PC-9 (cell line): ENCODE measurements at regions of chr21 and their contacts with region 1.

Region 1: GRCh38 chr21:35038772-35039319 is 10.3 kb downstream of the RUNX1 start:
- DNase-seq: no peak
- H3K4me3 ChIP-seq: no peak overlapping the region
- H3K27ac ChIP-seq: no peak overlapping the region
- H3K4me1 ChIP-seq: no peaks in the 10 kb centered on the region
- H3K27me3 ChIP-seq: no peaks in the 10 kb centered on the region
- CTCF ChIP-seq: no peak

Region 2: GRCh38 chr21:34737107-34737506 is 301.7 kb before region 1 on chr21:
- CTCF ChIA-PET with region 1: interaction called, 16 read pairs
- POLR2A ChIA-PET with region 1: no interaction called
- intact Hi-C with region 1: no loop called
- DNase-seq: no peak
- H3K4me3 ChIP-seq: no peak overlapping the region
- H3K27ac ChIP-seq: no peak overlapping the region
- H3K4me1 ChIP-seq: no peaks in the 10 kb centered on the region
- H3K27me3 ChIP-seq: no peaks in the 10 kb centered on the region
- CTCF ChIP-seq: no peak

Region 3: GRCh38 chr21:34754690-34755647 is 283.9 kb before region 1 on chr21:
- CTCF ChIA-PET with region 1: no interaction called
- POLR2A ChIA-PET with region 1: no interaction called
- intact Hi-C with region 1: no loop called
- DNase-seq: no peak
- H3K4me3 ChIP-seq: no peak overlapping the region
- H3K27ac ChIP-seq: no peak overlapping the region
- H3K4me1 ChIP-seq: no peaks in the 10 kb centered on the region
- H3K27me3 ChIP-seq: no peaks in the 10 kb centered on the region
- CTCF ChIP-seq: no peak

Region 4: DNA sequence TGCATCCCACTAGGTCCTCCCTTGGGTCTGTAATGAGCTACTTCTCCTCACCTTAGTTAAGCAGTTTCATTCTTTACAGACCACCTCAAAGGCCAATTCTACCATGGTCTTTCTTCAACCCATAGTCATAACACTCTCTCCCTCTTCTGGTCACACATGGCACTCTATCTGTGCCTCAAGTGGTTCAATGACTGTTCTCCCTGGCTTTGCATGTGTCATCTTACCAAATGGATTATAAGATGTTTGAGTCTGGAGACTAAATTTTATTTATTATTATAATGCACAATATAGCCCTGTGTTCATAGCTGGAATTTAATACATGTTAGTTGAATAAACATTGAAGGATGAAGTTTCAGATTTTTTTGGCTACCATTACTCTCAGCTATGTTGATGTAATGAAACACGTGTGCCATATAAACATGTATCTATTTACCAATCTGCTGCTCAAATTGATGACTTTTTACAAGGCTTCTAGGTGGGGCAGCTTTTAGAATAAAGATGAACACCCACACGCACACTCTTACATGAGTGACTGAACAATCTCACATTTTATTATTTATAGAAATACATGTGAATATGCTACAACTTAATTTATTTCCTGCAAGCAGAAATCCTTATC is 91.8 kb before region 1 on chr21:
- CTCF ChIA-PET with region 1: no interaction called
- POLR2A ChIA-PET with region 1: interaction called, 36 read pairs
- intact Hi-C with region 1: no loop called
- DNase-seq: no peak
- H3K4me3 ChIP-seq: no peak overlapping the region
- H3K27ac ChIP-seq: no peak overlapping the region
- H3K4me1 ChIP-seq: no peaks in the 10 kb centered on the region
- H3K27me3 ChIP-seq: no peaks in the 10 kb centered on the region
- CTCF ChIP-seq: no peak

Region 5: DNA sequence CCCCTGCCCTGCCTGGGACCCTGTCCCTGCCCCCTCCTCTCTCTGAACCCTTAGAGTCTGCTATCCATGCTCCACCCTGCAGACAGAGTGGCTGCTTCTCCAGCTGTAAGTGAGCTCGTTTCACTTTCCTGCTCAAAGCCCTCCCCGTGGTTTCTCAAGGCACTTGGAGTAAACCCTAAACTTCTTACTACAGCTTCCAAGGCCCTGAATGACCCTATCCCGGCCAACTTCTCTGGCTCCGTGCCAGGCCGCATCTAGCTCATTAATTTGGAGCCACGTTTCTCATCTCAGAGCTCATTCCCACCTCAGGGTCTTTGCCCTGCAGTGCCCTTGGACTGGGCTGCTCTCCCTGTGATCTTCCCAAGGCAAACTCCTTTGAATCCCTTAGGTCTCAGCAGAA is 245.4 kb after region 1 on chr21:
- CTCF ChIA-PET with region 1: no interaction called
- POLR2A ChIA-PET with region 1: no interaction called
- intact Hi-C with region 1: no loop called
- DNase-seq: no peak
- H3K4me3 ChIP-seq: no peak overlapping the region
- H3K27ac ChIP-seq: no peak overlapping the region
- H3K4me1 ChIP-seq: no peaks in the 10 kb centered on the region
- H3K27me3 ChIP-seq: no peaks in the 10 kb centered on the region
- CTCF ChIP-seq: no peak

Region 6: GRCh38 chr21:35375115-35375514 is 336.3 kb after region 1 on chr21:
- CTCF ChIA-PET with region 1: no interaction called
- POLR2A ChIA-PET with region 1: no interaction called
- intact Hi-C with region 1: no loop called
- DNase-seq: no peak
- H3K4me3 ChIP-seq: no peak overlapping the region
- H3K27ac ChIP-seq: no peak overlapping the region
- H3K4me1 ChIP-seq: no peaks in the 10 kb centered on the region
- H3K27me3 ChIP-seq: no peaks in the 10 kb centered on the region
- CTCF ChIP-seq: no peak

Region 7: GRCh38 chr21:36023092-36023480 is 984.2 kb after region 1 on chr21:
- CTCF ChIA-PET with region 1: interaction called, 10 read pairs
- POLR2A ChIA-PET with region 1: no interaction called
- intact Hi-C with region 1: no loop called
- DNase-seq: no peak
- H3K4me3 ChIP-seq: no peak overlapping the region
- H3K27ac ChIP-seq: no peak overlapping the region
- H3K4me1 ChIP-seq: no peaks in the 10 kb centered on the region
- H3K27me3 ChIP-seq: no peaks in the 10 kb centered on the region
- CTCF ChIP-seq: no peak